CD4-positive, alpha-beta memory T cell (primary cell): ENCODE measurements at regions of chr17 and their contacts with region 1.

Region 1: GRCh38 chr17:5486204-5487124 is at the start of gene MIS12:
- DNase-seq: peak; percentile 96 to 100 (median 98)
- H3K4me3 ChIP-seq: peak within 1 kb of the TSS; percentile 86 to 93
- H3K4me3 Mint-ChIP-seq: peak within 1 kb of the TSS; percentile 83 to 98 (median 94)
- H3K27ac ChIP-seq: peak within 1 kb of the TSS; percentile 95
- H3K27ac Mint-ChIP-seq: peak within 1 kb of the TSS; percentile 86 to 99 (median 99)
- H3K4me1 ChIP-seq: peaks cover 40% of the 10 kb centered on the region
- H3K4me1 Mint-ChIP-seq: peaks cover 28 to 66% (median 49%) of the 10 kb centered on the region in 4 donors
- H3K27me3 ChIP-seq: no peaks in the 10 kb centered on the region
- H3K27me3 Mint-ChIP-seq: no peaks in the 10 kb centered on the region
- total RNA-seq, gene MIS12: 42.2 to 45.0 TPM

Region 2: DNA sequence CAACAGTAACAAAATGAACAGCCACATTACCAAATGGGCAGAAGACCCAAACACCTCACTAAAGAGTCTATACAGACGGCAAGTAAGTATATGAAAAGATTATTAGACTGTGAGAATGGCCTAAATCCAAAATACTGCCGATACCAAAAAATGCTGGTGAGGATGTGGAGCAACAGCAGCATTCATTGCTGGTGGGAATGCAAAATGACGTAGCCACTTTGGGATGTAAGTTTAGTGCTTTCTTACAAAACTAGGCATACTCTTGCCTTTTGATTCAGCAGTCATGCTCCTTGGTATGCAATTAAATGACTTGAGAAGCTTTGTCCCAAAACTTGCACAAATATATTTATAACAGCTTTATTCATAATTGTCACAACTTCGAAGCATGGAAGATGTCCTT is 160.6 kb before region 1 on chr17:
- CTCF ChIA-PET with region 1: no interaction called
- POLR2A ChIA-PET with region 1: no interaction called
- intact Hi-C with region 1: no loop called
- DNase-seq: no peak
- H3K4me3 ChIP-seq: no peak overlapping the region
- H3K4me3 Mint-ChIP-seq: no peak overlapping the region
- H3K27ac ChIP-seq: no peak overlapping the region
- H3K27ac Mint-ChIP-seq: peak overlapping the region in 1 of 7 donors; percentile 55
- H3K4me1 ChIP-seq: peaks cover 25% of the 10 kb centered on the region
- H3K4me1 Mint-ChIP-seq: peaks cover 30 to 42% (median 37%) of the 10 kb centered on the region in 4 donors
- H3K27me3 ChIP-seq: no peaks in the 10 kb centered on the region
- H3K27me3 Mint-ChIP-seq: no peaks in the 10 kb centered on the region

Region 3: DNA sequence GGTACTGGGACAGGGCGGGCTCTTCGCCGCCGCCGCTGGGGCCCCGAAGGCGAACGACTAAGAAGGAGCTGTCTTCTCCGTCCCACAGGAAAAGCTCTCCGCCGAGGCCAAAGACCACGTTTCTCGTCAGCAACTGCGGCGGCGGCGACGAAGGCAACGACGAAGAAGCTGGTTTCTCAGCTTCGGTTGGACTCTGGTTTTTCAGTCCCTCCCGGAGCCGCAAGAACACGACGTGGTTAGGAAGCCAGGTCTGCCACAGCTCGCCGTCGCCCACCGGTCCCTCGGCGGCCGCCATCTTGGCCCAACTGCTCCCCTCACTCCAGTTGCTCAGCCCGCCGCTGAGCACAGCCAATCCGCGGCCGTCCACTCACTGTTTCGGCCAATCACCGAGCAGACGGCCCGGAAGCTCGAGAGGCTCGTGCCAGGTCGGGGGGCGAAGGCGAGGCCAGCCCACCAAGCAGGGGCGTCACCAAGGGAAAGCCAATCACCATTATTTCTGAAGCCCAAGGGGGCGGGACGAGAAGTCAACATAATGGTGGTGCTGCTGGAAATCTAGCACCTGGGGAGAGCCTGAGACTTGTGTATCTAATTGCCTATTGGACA is 67.0 kb before region 1 on chr17 and contains the start of gene NUP88:
- CTCF ChIA-PET with region 1: no interaction called
- POLR2A ChIA-PET with region 1: interaction called, 21 read pairs
- intact Hi-C with region 1: loop called (anchors 1 kb)
- DNase-seq: peak; percentile 92 to 97 (median 95)
- H3K4me3 ChIP-seq: peak within 1 kb of the TSS; percentile 82 to 99
- H3K4me3 Mint-ChIP-seq: peak within 1 kb of the TSS; percentile 97 to 99 (median 99)
- H3K27ac ChIP-seq: peak within 1 kb of the TSS; percentile 96
- H3K27ac Mint-ChIP-seq: peak within 1 kb of the TSS; percentile 97 to 100 (median 99)
- H3K4me1 ChIP-seq: peaks cover 48% of the 10 kb centered on the region
- H3K4me1 Mint-ChIP-seq: peaks cover 20 to 64% (median 40%) of the 10 kb centered on the region in 4 donors
- H3K27me3 ChIP-seq: no peaks in the 10 kb centered on the region
- H3K27me3 Mint-ChIP-seq: peaks cover 0 to 1% of the 10 kb centered on the region in 2 donors
- total RNA-seq, gene NUP88: 91.0 to 92.5 TPM

Region 4: DNA sequence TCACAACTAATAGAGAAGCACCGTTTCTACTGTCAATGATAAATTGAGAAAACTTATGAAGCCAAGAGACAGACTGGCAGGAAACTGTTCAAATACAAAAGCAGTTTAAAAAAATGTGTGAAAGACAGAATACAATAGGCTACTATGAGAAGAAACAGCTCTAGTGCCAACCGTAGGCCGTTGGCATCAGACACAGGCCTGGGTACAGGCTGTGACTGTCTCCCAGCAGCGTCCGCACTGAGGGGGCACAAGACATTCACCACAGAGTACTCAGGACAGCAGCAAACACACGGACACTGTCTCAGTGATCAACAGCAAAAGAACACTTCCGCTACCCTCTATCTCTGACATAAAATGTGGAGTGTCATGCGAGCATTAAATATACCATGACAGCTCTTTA is 39.7 kb before region 1 on chr17:
- CTCF ChIA-PET with region 1: no interaction called
- POLR2A ChIA-PET with region 1: no interaction called
- intact Hi-C with region 1: no loop called
- DNase-seq: no peak
- H3K4me3 ChIP-seq: no peak overlapping the region
- H3K4me3 Mint-ChIP-seq: no peak overlapping the region
- H3K27ac ChIP-seq: no peak overlapping the region
- H3K27ac Mint-ChIP-seq: no peak overlapping the region
- H3K4me1 ChIP-seq: no peaks in the 10 kb centered on the region
- H3K4me1 Mint-ChIP-seq: no peaks in the 10 kb centered on the region
- H3K27me3 ChIP-seq: no peaks in the 10 kb centered on the region
- H3K27me3 Mint-ChIP-seq: no peaks in the 10 kb centered on the region

Region 5: DNA sequence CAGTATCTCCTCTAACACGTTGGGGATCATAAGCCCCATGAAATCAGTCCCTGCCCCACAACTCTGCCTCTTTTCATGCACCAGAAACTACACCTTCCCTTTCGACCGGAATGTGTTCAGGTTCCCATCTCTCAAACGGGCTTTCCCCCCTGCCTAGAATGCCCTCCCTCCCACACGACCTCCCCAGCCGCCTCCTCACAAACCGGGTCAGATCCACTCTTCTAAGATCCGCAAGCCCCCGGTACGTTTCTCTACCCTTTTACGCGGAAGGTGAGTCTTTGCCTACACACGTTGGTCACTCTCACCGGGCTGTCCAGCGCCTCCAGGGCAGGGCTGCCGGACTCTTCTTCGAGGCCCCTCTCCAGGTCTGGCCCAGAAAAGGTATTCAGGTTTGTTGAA is 18.4 kb before region 1 on chr17:
- CTCF ChIA-PET with region 1: interaction called, 4 read pairs
- POLR2A ChIA-PET with region 1: interaction called, 84 read pairs
- intact Hi-C with region 1: loop called (anchors 1 kb)
- DNase-seq: peak in 2 of 5 donors; percentile 7 to 20
- H3K4me3 ChIP-seq: peak overlapping the region; percentile 33 to 68
- H3K4me3 Mint-ChIP-seq: peak overlapping the region; percentile 80 to 95 (median 88)
- H3K27ac ChIP-seq: peak overlapping the region; percentile 60
- H3K27ac Mint-ChIP-seq: peak overlapping the region; percentile 33 to 94 (median 83)
- H3K4me1 ChIP-seq: peaks cover 18% of the 10 kb centered on the region
- H3K4me1 Mint-ChIP-seq: peaks cover 32 to 50% (median 43%) of the 10 kb centered on the region in 4 donors
- H3K27me3 ChIP-seq: no peaks in the 10 kb centered on the region
- H3K27me3 Mint-ChIP-seq: no peaks in the 10 kb centered on the region

Region 6: DNA sequence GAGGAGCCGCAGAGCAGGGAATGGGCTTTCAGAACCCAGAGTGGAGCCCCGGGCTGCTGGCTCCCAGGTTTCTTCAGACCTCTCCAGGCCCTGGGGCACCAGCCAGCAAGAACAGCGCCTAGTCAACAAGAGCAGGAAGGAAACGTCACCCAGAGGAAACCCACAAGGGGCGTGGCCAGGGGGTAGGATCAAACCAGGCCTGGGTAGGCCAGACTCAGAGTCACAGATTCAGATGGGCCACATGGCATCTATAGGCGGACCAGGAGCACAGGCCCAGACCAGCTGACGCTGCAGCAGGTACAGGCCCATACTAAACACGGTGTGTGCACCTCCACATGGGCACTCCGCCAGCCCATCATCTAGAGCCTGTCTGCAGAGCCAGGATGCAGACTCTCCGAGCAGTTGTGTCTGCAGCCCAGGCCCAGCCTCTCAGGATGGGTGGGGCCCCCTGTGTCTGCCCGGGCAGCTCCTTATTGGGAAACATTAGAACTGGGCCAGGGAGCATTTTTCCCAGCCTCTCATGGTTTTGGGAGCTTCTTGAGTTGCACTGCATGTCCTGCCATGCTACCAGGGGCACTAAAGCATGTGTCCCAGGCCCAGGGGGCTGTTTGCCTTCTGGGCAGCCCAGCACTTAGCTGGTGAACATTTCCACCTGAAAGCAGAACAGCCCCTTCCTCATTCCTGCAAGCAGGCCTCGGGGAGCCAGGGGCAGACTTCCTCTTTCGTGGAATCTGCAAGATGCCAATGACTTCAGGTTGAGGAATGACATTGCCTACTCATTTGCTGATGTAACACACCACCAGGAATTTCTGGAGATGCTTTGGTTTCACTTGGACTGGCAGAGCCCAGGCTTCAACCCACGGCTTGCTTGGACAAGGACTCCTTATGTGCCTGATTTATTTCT is 98.2 kb after region 1 on chr17 and contains the start of gene NLRP1:
- CTCF ChIA-PET with region 1: no interaction called
- POLR2A ChIA-PET with region 1: interaction called, 25 read pairs
- intact Hi-C with region 1: loop called (anchors 1 kb)
- DNase-seq: peak; percentile 94 to 99 (median 95)
- H3K4me3 ChIP-seq: peak within 1 kb of the TSS; percentile 65 to 99
- H3K4me3 Mint-ChIP-seq: peak within 1 kb of the TSS; percentile 95 to 98 (median 97)
- H3K27ac ChIP-seq: peak within 1 kb of the TSS; percentile 88
- H3K27ac Mint-ChIP-seq: peak within 1 kb of the TSS; percentile 95 to 99 (median 98)
- H3K4me1 ChIP-seq: peaks cover 70% of the 10 kb centered on the region
- H3K4me1 Mint-ChIP-seq: peaks cover 41 to 86% (median 63%) of the 10 kb centered on the region in 4 donors
- H3K27me3 ChIP-seq: no peaks in the 10 kb centered on the region
- H3K27me3 Mint-ChIP-seq: no peaks in the 10 kb centered on the region
- total RNA-seq, gene NLRP1: 280 to 292 TPM

Region 7: GRCh38 chr17:6651357-6651918 is 1165.0 kb after region 1 on chr17 and contains the starts of genes C17orf100 and MED31:
- CTCF ChIA-PET with region 1: no interaction called
- POLR2A ChIA-PET with region 1: no interaction called
- intact Hi-C with region 1: loop called (anchors 1 kb)
- DNase-seq: peak; percentile 93 to 96 (median 95)
- H3K4me3 ChIP-seq: peak within 1 kb of the TSS; percentile 80 to 83
- H3K4me3 Mint-ChIP-seq: peak within 1 kb of the TSS; percentile 96 to 100 (median 99)
- H3K27ac ChIP-seq: peak within 1 kb of the TSS; percentile 99
- H3K27ac Mint-ChIP-seq: peak within 1 kb of the TSS; percentile 99 to 100 (median 100)
- H3K4me1 ChIP-seq: peaks cover 50% of the 10 kb centered on the region
- H3K4me1 Mint-ChIP-seq: peaks cover 36 to 82% (median 61%) of the 10 kb centered on the region in 4 donors
- H3K27me3 ChIP-seq: no peaks in the 10 kb centered on the region
- H3K27me3 Mint-ChIP-seq: no peaks in the 10 kb centered on the region
- total RNA-seq, gene C17orf100: 4.0 to 4.3 TPM
- total RNA-seq, gene MED31: 30.8 to 35.8 TPM